ENCODE measurements at regions of chr3 and their contacts with region 1.

Region 1: DNA sequence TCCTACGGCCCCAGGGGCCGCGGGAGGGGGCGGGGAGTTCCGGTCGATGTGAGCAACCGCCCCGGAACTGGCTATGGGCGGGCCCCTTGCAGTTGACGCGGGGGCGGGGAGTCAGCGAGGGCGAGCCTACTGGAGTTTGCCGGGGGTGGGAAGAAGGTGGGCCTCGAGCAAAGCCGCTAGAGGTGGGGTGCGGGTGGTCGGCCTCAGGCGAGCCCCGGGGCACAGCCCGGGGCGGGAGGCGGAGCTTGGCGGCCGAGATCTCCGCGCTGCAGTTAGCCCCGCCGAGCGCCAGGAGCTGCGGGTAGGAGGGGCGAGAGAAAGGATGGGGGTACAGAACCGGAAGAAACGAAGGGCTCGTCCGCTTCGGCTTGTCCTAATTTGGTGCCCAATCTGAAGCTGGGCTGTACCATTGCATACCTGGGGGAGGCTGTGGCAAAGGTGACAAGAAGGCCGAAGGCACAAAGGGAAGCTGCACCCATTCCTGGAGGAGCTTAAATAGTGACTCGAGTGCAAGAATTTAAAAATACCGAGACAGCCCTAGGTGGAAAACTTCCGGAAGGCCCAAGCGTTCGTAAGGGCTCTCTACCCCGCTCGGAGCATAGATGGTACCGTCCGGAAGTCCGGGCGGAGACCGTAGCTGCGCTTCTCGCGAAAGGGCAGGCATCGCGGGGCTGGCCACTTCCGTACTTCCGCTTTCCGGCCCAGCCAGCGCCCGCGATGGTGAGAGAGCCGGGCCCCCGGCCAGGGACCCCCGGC is at the starts of genes ARPC4 and TADA3:
- DNase-seq: peak; percentile 95 to 97 (median 96)
- ATAC-seq: peak; percentile 92
- H3K4me3 ChIP-seq: peak within 1 kb of the TSS; percentile 99
- H3K27ac ChIP-seq: peak within 1 kb of the TSS; percentile 100
- H3K4me1 ChIP-seq: peaks cover 15% of the 10 kb centered on the region in 2 experiments; a peak in 4 of 5 replicates
- H3K27me3 ChIP-seq: no peaks in the 10 kb centered on the region
- CTCF ChIP-seq: peak in 1 of 3 experiments; percentile 18; a peak in 1 of 6 replicates
- EP300 ChIP-seq: no peak; the same call in none of the 2 replicates
- POLR2A ChIP-seq: peak; percentile 93
- RAD21 ChIP-seq: no peak; a peak in 2 of 4 replicates
- polyA plus RNA-seq, gene ARPC4: 20.1 to 28.1 TPM
- polyA plus RNA-seq, gene TADA3: 4.1 to 6.3 TPM

Region 2: GRCh38 chr3:9503283-9503682 is 289.3 kb before region 1 on chr3:
- CTCF ChIA-PET with region 1: no interaction called
- POLR2A ChIA-PET with region 1: no interaction called
- in situ Hi-C with region 1: no loop called
- intact Hi-C with region 1: loop called (anchors 10 kb)
- DNase-seq: peak; percentile 82 to 90 (median 84)
- ATAC-seq: peak; percentile 77
- H3K4me3 ChIP-seq: no peak overlapping the region
- H3K27ac ChIP-seq: no peak overlapping the region
- H3K4me1 ChIP-seq: peaks cover 0 to 8% of the 10 kb centered on the region in 2 experiments; a peak in 3 of 5 replicates
- H3K27me3 ChIP-seq: peaks cover 20 to 47% of the 10 kb centered on the region in 2 experiments; a peak in 4 of 5 replicates
- CTCF ChIP-seq: peak; percentile 88 to 98 (median 97)
- EP300 ChIP-seq: no peak
- POLR2A ChIP-seq: no peak
- RAD21 ChIP-seq: peak; percentile 92 to 96

Region 3: DNA sequence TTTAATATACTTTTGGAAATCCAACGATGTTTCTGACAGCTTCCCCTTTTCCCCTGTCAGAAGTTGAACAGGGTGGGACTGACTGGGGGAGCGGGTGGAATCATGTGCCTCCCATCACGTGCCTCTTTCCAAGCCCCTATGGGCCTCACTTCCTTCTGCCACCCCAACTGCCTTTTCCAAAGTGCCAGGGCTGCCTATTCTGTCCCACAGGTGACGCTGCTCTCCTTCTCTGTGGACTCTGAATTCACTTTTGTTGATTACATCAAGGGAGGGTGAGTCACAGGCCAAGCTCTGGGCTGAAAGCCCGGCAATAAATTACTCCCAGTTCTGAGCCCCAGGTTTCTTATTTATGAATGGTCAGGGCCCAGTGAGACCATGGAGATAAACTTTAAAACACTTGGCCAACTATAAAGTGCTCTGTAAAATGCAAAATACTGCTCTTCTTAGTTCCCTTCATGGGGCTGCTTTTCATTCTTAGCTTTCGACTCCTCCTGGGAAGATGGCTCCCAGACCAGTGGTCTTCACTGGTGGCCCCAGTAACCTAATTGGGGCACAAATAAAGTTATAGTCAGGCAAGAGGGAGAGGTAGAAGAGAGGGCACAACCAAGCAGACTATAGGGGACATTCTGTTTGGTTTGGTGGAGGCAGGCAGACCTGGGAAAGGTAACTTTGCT is 76.7 kb before region 1 on chr3:
- CTCF ChIA-PET with region 1: no interaction called
- POLR2A ChIA-PET with region 1: no interaction called
- in situ Hi-C with region 1: no loop called
- intact Hi-C with region 1: loop called (anchors 5 kb)
- DNase-seq: peak; percentile 82 to 94 (median 87)
- ATAC-seq: peak; percentile 99
- H3K4me3 ChIP-seq: no peak overlapping the region
- H3K27ac ChIP-seq: peak overlapping the region; percentile 62; the same call in 2 of the 3 replicates
- H3K4me1 ChIP-seq: peaks cover 5 to 10% of the 10 kb centered on the region in 2 experiments; a peak in 4 of 5 replicates
- H3K27me3 ChIP-seq: peaks cover 33 to 38% of the 10 kb centered on the region in 2 experiments
- CTCF ChIP-seq: peak; percentile 93 to 99 (median 99)
- EP300 ChIP-seq: peak; percentile 79
- POLR2A ChIP-seq: no peak
- RAD21 ChIP-seq: peak; percentile 99

Region 4: GRCh38 chr3:9749645-9750555 is 42.7 kb before region 1 on chr3 and contains the start of gene OGG1:
- CTCF ChIA-PET with region 1: no interaction called
- POLR2A ChIA-PET with region 1: interaction called, 4 read pairs
- in situ Hi-C with region 1: no loop called
- intact Hi-C with region 1: loop called (anchors 1 kb)
- DNase-seq: peak; percentile 99 to 100 (median 99)
- ATAC-seq: peak; percentile 98
- H3K4me3 ChIP-seq: peak within 1 kb of the TSS; percentile 69
- H3K27ac ChIP-seq: peak within 1 kb of the TSS; percentile 82
- H3K4me1 ChIP-seq: peaks cover 12 to 31% of the 10 kb centered on the region in 2 experiments; a peak in 4 of 5 replicates
- H3K27me3 ChIP-seq: no peaks in the 10 kb centered on the region
- CTCF ChIP-seq: peak in 2 of 3 experiments; percentile 9 to 19; a peak in 3 of 6 replicates
- EP300 ChIP-seq: no peak; the same call in none of the 2 replicates
- POLR2A ChIP-seq: peak; percentile 87
- RAD21 ChIP-seq: peak in 1 of 2 experiments; percentile 8; a peak in 1 of 4 replicates
- polyA plus RNA-seq, gene OGG1: 6.6 to 12.0 TPM

Region 5: GRCh38 chr3:9779721-9780457 is 12.7 kb before region 1 on chr3:
- CTCF ChIA-PET with region 1: no interaction called
- POLR2A ChIA-PET with region 1: interaction called, 21 read pairs
- in situ Hi-C with region 1: no loop called
- intact Hi-C with region 1: no loop called
- DNase-seq: no peak
- ATAC-seq: no peak; the same call in 1 of the 3 replicates
- H3K4me3 ChIP-seq: no peak overlapping the region
- H3K27ac ChIP-seq: peak overlapping the region; percentile 11; the same call in 1 of the 3 replicates
- H3K4me1 ChIP-seq: peaks cover 13 to 15% of the 10 kb centered on the region in 2 experiments
- H3K27me3 ChIP-seq: no peaks in the 10 kb centered on the region
- CTCF ChIP-seq: no peak
- EP300 ChIP-seq: no peak
- POLR2A ChIP-seq: no peak
- RAD21 ChIP-seq: no peak

Region 6: DNA sequence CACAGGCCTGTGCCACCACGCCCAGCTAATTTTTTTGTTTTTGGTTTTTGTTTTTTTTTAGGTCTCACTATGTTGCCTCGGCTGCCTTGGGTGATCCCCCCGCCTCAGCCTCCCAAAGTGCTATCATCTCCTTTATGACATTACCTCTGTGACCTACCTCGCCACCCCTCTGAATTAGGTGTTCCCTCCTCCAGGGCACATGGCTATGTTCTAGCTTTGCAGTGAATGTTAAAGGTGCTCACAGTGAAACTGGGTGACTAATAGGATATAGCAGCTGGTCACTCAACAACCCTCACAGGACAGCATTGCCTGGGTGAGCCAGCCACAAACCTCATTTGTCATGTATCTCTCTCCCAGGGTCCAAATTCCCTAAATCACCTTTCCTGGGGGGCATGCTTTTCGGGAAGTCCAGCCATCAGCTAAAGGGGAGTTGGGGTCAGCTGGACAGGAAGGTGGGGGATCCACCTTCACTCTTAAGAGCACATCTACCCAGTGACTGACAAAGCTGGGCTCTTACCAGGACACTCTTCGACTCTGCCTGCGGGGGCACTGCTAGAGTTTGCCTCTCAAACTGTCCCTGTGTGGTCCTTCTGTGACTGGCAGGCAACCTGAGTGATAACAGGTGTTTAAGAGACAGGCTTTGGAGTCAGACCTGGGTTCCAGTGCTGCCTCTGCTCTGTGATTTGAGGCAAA is 15.9 kb after region 1 on chr3:
- CTCF ChIA-PET with region 1: no interaction called
- POLR2A ChIA-PET with region 1: interaction called, 49 read pairs
- in situ Hi-C with region 1: no loop called
- intact Hi-C with region 1: no loop called
- DNase-seq: peak in 3 of 4 experiments; percentile 44 to 51 (median 44)
- ATAC-seq: peak; percentile 81
- H3K4me3 ChIP-seq: no peak overlapping the region
- H3K27ac ChIP-seq: no peak overlapping the region
- H3K4me1 ChIP-seq: peaks cover 0 to 8% of the 10 kb centered on the region in 2 experiments; a peak in 2 of 5 replicates
- H3K27me3 ChIP-seq: no peaks in the 10 kb centered on the region
- CTCF ChIP-seq: peak; percentile 26 to 55 (median 42); a peak in 3 of 6 replicates
- EP300 ChIP-seq: no peak
- POLR2A ChIP-seq: 0 out of 2 replicates have a peak, but pooled peaks have one; percentile 39
- RAD21 ChIP-seq: no peak

Region 7: GRCh38 chr3:10055097-10055496 is 262.5 kb after region 1 on chr3:
- CTCF ChIA-PET with region 1: no interaction called
- POLR2A ChIA-PET with region 1: no interaction called
- in situ Hi-C with region 1: no loop called
- intact Hi-C with region 1: no loop called
- DNase-seq: no peak
- ATAC-seq: no peak
- H3K4me3 ChIP-seq: no peak overlapping the region
- H3K27ac ChIP-seq: no peak overlapping the region
- H3K4me1 ChIP-seq: no peaks in the 10 kb centered on the region
- H3K27me3 ChIP-seq: no peaks in the 10 kb centered on the region
- CTCF ChIP-seq: no peak
- EP300 ChIP-seq: no peak
- POLR2A ChIP-seq: no peak
- RAD21 ChIP-seq: no peak

Measured in K562 (cell line).